Right cardiac atrium (tissue), 5 donors: ENCODE measurements at regions of chr4 and their contacts with region 1.

Region 1: GRCh38 chr4:117042962-117043361 is 42.4 kb downstream of the TRAM1L1 start:
- DNase-seq: no peak
- ATAC-seq: no peak
- H3K4me3 ChIP-seq: no peak overlapping the region
- H3K27ac ChIP-seq: no peak overlapping the region
- H3K4me1 ChIP-seq: no peaks in the 10 kb centered on the region
- H3K27me3 ChIP-seq: no peaks in the 10 kb centered on the region

Region 2: GRCh38 chr4:116520886-116521285 is 522.1 kb before region 1 on chr4:
- intact Hi-C with region 1: no loop called
- DNase-seq: no peak
- ATAC-seq: no peak
- H3K4me3 ChIP-seq: no peak overlapping the region
- H3K27ac ChIP-seq: no peak overlapping the region
- H3K4me1 ChIP-seq: no peaks in the 10 kb centered on the region
- H3K27me3 ChIP-seq: no peaks in the 10 kb centered on the region

Region 3: DNA sequence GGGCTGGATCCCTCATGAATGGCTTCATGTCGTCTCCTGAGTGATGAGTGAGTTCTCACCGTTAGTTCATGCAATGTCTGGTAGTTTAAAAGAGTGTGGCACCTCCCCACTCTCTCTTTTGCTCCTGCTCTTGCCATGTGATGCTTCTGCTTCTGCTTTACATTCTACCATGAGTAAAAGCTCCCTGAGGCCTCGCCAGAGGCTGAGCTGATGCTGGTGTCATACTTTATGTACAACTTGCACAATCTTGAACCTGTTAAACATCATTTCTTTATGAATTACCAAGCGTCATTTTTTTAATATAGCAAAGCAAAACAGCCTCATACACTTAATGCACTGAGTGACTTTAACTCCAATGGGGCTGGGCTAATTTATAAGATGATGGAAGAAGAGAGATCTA is 254.1 kb after region 1 on chr4:
- intact Hi-C with region 1: loop called in 1 of 4 experiments (anchors 5 kb)
- DNase-seq: no peak
- ATAC-seq: no peak
- H3K4me3 ChIP-seq: no peak overlapping the region
- H3K27ac ChIP-seq: no peak overlapping the region
- H3K4me1 ChIP-seq: no peaks in the 10 kb centered on the region
- H3K27me3 ChIP-seq: no peaks in the 10 kb centered on the region